H1 (cell line): ENCODE measurements at regions of chr17 and their contacts with region 1.

Region 1: GRCh38 chr17:41665566-41666236 is 23.0 kb upstream of the EIF1 start:
- DNase-seq: peak in 1 of 2 experiments; percentile 97
- H3K4me3 ChIP-seq: peak overlapping the region; percentile 12 to 67 (median 44); a peak in 7 of 8 replicates
- H3K27ac ChIP-seq: no peak overlapping the region
- H3K4me1 ChIP-seq: peaks cover 0 to 14% (median 6%) of the 10 kb centered on the region in 4 experiments; a peak in 5 of 7 replicates
- H3K27me3 ChIP-seq: no peaks in the 10 kb centered on the region; a peak in 3 of 7 replicates
- CTCF ChIP-seq: peak; percentile 90 to 92 (median 92)
- EP300 ChIP-seq: no peak; a peak in 1 of 3 replicates
- POLR2A ChIP-seq: no peak
- RAD21 ChIP-seq: peak; percentile 42 to 49

Region 2: DNA sequence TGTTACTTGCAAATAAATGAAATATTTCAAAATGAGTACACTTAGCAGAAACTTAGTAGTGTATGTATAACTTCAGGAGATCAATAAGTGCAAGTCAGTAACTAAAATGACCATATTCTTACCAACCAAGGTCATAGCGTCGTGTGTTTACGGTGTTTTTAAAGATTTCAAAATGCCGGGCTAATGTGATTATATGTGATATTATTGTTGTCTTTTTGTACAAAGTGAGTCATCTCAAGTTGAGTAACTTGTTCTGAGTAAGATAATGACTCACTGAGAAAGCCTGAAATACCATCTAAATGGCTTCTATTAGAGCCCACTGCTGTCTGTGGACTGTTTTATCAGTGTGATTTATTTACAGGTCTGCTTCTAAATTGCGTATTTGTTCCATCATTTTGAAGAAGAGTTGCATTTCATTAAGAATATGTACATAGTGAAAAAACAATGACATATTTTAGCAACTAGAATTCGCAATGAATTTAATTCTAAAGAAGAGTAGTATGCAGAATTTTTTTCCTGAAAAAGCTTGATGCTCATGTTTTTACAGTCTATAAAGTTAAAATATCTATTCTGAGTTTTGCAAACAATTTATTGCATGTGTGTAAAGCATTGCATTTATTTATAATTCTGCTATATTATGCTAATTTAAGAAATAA is 811.4 kb before region 1 on chr17:
- CTCF ChIA-PET with region 1: interaction called, 42 read pairs
- POLR2A ChIA-PET with region 1: no interaction called
- DNase-seq: no peak
- H3K4me3 ChIP-seq: no peak overlapping the region
- H3K27ac ChIP-seq: no peak overlapping the region
- H3K4me1 ChIP-seq: peaks cover 0 to 8% (median 2%) of the 10 kb centered on the region in 4 experiments; a peak in 3 of 7 replicates
- H3K27me3 ChIP-seq: no peaks in the 10 kb centered on the region; a peak in 1 of 7 replicates
- CTCF ChIP-seq: no peak
- EP300 ChIP-seq: no peak
- POLR2A ChIP-seq: no peak
- RAD21 ChIP-seq: no peak

Region 3: GRCh38 chr17:41486809-41487720 is 178.6 kb before region 1 on chr17:
- CTCF ChIA-PET with region 1: interaction called, 12 read pairs
- POLR2A ChIA-PET with region 1: no interaction called
- DNase-seq: peak; percentile 59 to 97
- H3K4me3 ChIP-seq: no peak overlapping the region
- H3K27ac ChIP-seq: no peak overlapping the region
- H3K4me1 ChIP-seq: no peaks in the 10 kb centered on the region; a peak in 2 of 7 replicates
- H3K27me3 ChIP-seq: peaks cover 0 to 12% (median 6%) of the 10 kb centered on the region in 4 experiments; a peak in 6 of 7 replicates
- CTCF ChIP-seq: peak; percentile 90 to 98 (median 93)
- EP300 ChIP-seq: no peak
- POLR2A ChIP-seq: no peak
- RAD21 ChIP-seq: peak; percentile 75 to 83

Region 4: DNA sequence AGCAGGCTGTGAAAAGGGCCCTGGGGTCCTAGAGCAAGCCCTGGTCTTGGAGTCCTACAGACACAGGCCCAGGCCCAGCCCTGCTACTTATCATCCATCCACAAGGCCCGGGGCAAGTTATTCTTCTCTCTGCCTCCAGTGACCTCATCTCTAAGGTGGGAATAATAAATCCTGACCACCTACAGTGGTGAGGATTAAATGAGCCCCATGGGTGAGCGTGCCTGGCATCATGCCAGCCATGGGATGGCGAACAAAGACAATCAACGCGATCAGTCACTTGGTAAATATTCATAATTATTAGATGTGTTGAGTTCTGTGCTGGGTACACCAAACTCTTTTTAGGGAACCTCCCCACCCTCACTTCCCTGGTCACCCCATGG is 152.5 kb before region 1 on chr17:
- CTCF ChIA-PET with region 1: interaction called, 12 read pairs
- POLR2A ChIA-PET with region 1: no interaction called
- DNase-seq: no peak
- H3K4me3 ChIP-seq: no peak overlapping the region
- H3K27ac ChIP-seq: no peak overlapping the region
- H3K4me1 ChIP-seq: peaks cover 0 to 5% (median 3%) of the 10 kb centered on the region in 4 experiments; a peak in 5 of 7 replicates
- H3K27me3 ChIP-seq: no peaks in the 10 kb centered on the region; a peak in 1 of 7 replicates
- CTCF ChIP-seq: no peak
- EP300 ChIP-seq: no peak
- POLR2A ChIP-seq: no peak
- RAD21 ChIP-seq: no peak

Region 5: GRCh38 chr17:41538565-41538991 is 127.1 kb before region 1 on chr17:
- CTCF ChIA-PET with region 1: interaction called, 26 read pairs
- POLR2A ChIA-PET with region 1: no interaction called
- DNase-seq: no peak
- H3K4me3 ChIP-seq: no peak overlapping the region
- H3K27ac ChIP-seq: no peak overlapping the region
- H3K4me1 ChIP-seq: peaks cover 10 to 23% (median 16%) of the 10 kb centered on the region in 4 experiments
- H3K27me3 ChIP-seq: no peaks in the 10 kb centered on the region; a peak in 1 of 7 replicates
- CTCF ChIP-seq: no peak
- EP300 ChIP-seq: no peak
- POLR2A ChIP-seq: no peak
- RAD21 ChIP-seq: no peak

Region 6: DNA sequence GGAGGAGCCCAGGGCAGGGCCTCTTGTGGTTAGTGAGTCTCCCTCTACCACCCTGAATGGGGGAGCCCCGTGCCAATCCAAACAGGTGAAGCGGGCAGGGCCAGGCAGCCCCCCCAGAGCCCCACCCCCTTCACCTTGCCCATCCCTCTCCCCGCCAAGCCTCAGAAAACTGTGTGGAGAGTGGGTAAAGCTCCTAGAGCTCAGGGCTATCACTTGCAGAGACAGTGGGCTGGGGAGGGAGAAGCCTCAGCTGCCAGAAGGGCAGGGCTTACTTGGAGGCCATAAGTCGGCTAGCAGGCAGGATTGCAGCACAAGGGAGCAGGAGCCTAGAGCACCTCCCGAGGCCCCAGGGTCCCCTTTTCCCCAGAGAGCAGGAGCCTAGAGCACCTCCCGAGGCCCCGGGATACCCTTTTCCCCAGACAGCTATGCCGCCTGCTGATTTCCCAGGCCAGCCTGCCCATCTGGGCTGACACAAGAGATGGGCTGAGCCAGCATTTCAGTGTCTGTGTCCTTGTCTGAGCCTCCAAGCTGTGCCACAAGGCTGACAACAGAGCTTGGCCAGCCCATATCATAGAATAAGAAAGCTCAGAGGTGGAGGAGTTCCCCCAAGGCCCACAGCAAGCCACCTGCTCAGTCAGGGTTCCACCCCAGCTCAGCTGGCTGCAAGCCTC is 72.3 kb before region 1 on chr17:
- CTCF ChIA-PET with region 1: interaction called, 10 read pairs
- POLR2A ChIA-PET with region 1: no interaction called
- DNase-seq: no peak
- H3K4me3 ChIP-seq: no peak overlapping the region
- H3K27ac ChIP-seq: no peak overlapping the region
- H3K4me1 ChIP-seq: no peaks in the 10 kb centered on the region; a peak in 1 of 7 replicates
- H3K27me3 ChIP-seq: no peaks in the 10 kb centered on the region
- CTCF ChIP-seq: no peak
- EP300 ChIP-seq: no peak
- POLR2A ChIP-seq: no peak
- RAD21 ChIP-seq: no peak

Region 7: GRCh38 chr17:41688699-41689496 is 23.2 kb after region 1 on chr17 and contains the start of gene EIF1:
- CTCF ChIA-PET with region 1: interaction called, 19 read pairs
- POLR2A ChIA-PET with region 1: interaction called, 106 read pairs
- DNase-seq: peak; percentile 100
- H3K4me3 ChIP-seq: peak within 1 kb of the TSS; percentile 92 to 99 (median 94)
- H3K27ac ChIP-seq: peak within 1 kb of the TSS; percentile 97
- H3K4me1 ChIP-seq: peaks cover 0 to 3% (median 2%) of the 10 kb centered on the region in 4 experiments; a peak in 4 of 7 replicates
- H3K27me3 ChIP-seq: no peaks in the 10 kb centered on the region
- CTCF ChIP-seq: no peak
- EP300 ChIP-seq: peak in 1 of 2 experiments; percentile 48; a peak in 1 of 3 replicates
- POLR2A ChIP-seq: peak; percentile 99
- RAD21 ChIP-seq: no peak
- total RNA-seq, gene EIF1: 528 and 539 TPM in 2 replicates

Region 8: GRCh38 chr17:41731836-41732235 is 66.1 kb after region 1 on chr17:
- CTCF ChIA-PET with region 1: no interaction called
- POLR2A ChIA-PET with region 1: no interaction called
- DNase-seq: no peak
- H3K4me3 ChIP-seq: no peak overlapping the region
- H3K27ac ChIP-seq: no peak overlapping the region
- H3K4me1 ChIP-seq: peaks cover 0 to 3% (median 0%) of the 10 kb centered on the region in 4 experiments; a peak in 5 of 7 replicates
- H3K27me3 ChIP-seq: peaks cover 19 to 58% (median 48%) of the 10 kb centered on the region in 4 experiments
- CTCF ChIP-seq: no peak
- EP300 ChIP-seq: no peak
- POLR2A ChIP-seq: no peak
- RAD21 ChIP-seq: no peak